Activated CD4-positive, alpha-beta memory T cell treated with anti-CD3 and anti-CD28 coated beads for 36 hours (primary cell): ENCODE measurements at regions of chr2 and their contacts with region 1.

Region 1: DNA sequence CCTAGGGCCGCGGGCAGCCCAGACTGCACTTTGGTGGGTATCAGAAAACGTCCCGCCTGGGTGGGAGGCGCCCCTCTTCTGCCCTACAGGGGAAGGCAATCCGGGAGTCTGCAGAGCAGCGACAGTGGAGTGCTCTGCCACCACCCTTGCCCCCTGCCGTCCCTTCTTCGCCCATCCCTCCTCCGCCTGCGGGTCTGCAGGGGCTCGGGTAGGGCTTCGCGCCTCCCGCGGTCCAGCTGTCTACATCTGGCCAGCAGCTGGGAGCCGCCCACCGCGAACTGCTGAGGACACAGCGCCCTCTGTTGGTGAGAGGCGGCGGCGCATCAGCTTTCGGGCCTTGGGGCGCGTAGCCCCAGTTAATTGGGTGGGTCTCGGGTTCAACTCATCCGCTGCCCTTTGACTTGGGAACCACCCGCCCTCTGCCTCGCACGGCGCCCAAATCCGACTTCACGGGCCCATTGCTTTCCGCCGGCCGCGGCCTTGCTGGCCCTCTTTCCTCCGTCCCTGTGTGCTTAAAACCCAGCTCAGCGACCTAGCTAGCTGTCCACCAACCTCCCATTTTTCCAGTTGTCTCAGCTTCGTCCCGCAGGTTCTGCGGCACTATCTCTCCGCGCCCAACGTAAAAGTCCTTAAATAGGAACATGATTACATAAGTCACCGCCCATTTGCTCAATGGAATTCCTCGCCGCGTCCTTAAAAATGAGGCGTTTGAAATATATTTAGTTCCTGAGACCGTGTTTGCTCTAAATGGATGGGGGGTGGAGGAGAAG is 17.6 kb downstream of the WNT10A start:
- DNase-seq: peak; percentile 88
- H3K4me3 Mint-ChIP-seq: peak overlapping the region; percentile 58
- H3K27ac Mint-ChIP-seq: peak overlapping the region; percentile 72
- H3K4me1 Mint-ChIP-seq: peaks cover 43% of the 10 kb centered on the region
- H3K27me3 Mint-ChIP-seq: peaks cover 16% of the 10 kb centered on the region

Region 2: DNA sequence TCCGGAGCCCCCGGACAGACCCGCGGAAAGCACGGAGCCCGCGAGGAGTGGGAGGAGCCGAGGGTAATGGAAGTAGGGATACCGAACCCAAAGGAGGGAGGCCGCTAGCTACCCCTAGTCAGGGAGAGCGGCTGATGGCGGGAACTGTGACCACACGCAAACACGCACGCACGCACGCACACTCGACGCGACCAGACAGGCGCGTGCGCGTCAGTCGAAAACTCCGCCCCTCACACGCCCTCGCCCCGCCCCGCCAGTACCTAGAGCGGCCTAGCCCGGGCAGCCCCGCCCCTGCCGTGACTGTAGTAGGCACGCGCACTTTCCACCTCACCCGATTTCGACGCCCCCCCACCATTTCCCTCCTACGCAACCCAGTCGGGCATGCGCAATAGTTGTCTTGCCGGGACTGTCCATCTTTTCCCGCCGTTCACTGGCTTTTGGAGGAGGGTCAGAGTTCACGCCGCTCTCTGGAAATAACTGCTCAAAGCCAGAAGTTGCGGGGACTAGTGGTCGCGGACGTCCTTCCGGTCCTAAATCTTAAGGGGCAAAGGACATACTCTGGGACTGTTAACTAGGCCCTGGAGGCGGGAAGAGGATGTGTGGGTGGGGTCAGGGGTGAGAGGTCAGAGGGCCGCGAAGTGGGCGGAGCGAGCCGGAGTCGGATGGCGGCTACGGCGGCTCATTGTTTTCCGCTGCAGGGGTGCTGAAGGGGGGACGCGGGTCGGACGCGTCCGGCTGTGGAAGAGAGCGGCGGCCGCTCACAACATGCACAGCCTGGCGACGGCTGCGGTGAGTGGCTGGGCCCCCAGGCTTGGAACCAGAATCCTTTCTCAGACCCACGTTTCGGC is 329.9 kb before region 1 on chr2 and contains the starts of genes CNOT9 and USP37:
- CTCF ChIA-PET with region 1: no interaction called
- POLR2A ChIA-PET with region 1: no interaction called
- intact Hi-C with region 1: loop called (anchors 2 kb)
- DNase-seq: peak; percentile 100
- H3K4me3 Mint-ChIP-seq: peak within 1 kb of the TSS; percentile 96
- H3K27ac Mint-ChIP-seq: peak within 1 kb of the TSS; percentile 100
- H3K4me1 Mint-ChIP-seq: peaks cover 54% of the 10 kb centered on the region
- H3K27me3 Mint-ChIP-seq: no peaks in the 10 kb centered on the region
- total RNA-seq, gene CNOT9: 84.7 to 87.3 TPM
- total RNA-seq, gene USP37: 27.2 to 28.7 TPM

Region 3: DNA sequence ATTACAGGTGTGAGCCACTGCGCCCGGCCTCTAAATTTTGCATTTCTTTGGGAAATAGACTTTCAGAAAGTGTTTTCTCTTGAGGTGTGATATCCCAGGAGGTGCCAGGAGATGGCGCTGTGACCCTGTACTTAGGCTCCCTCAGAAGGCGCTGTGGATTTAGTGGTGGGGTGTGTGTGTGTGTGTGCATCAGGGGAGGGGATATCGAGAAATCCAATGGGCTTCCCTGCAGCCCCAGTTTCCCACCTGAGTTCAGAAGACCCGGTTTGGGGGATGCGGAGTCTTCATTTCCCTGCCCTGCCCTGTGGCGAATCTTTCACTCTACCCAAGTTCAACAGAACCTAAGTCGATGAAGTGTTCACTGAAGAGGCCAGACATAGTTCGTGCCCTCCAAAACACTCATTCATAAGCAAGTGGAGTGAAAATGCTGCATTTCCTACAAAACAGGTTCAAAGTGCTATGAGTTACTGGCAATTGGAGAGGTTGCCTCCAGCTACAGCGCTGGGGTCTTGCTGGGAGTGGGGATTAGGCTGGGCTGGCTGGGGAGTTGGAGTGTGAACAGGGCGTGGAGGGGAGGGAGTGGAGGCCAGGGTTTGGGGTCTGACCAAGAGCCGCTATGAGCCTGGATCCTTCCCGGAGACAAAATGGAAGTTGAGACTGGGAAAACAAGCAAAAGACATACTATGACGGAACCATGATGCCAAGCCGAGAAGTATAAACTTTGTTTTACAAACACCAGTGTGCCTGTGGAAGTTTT is 45.2 kb before region 1 on chr2:
- CTCF ChIA-PET with region 1: interaction called, 107 read pairs
- POLR2A ChIA-PET with region 1: no interaction called
- intact Hi-C with region 1: loop called (anchors 1 kb)
- DNase-seq: peak; percentile 80
- H3K4me3 Mint-ChIP-seq: no peak overlapping the region
- H3K27ac Mint-ChIP-seq: no peak overlapping the region
- H3K4me1 Mint-ChIP-seq: no peaks in the 10 kb centered on the region
- H3K27me3 Mint-ChIP-seq: peaks cover 48% of the 10 kb centered on the region

Region 4: DNA sequence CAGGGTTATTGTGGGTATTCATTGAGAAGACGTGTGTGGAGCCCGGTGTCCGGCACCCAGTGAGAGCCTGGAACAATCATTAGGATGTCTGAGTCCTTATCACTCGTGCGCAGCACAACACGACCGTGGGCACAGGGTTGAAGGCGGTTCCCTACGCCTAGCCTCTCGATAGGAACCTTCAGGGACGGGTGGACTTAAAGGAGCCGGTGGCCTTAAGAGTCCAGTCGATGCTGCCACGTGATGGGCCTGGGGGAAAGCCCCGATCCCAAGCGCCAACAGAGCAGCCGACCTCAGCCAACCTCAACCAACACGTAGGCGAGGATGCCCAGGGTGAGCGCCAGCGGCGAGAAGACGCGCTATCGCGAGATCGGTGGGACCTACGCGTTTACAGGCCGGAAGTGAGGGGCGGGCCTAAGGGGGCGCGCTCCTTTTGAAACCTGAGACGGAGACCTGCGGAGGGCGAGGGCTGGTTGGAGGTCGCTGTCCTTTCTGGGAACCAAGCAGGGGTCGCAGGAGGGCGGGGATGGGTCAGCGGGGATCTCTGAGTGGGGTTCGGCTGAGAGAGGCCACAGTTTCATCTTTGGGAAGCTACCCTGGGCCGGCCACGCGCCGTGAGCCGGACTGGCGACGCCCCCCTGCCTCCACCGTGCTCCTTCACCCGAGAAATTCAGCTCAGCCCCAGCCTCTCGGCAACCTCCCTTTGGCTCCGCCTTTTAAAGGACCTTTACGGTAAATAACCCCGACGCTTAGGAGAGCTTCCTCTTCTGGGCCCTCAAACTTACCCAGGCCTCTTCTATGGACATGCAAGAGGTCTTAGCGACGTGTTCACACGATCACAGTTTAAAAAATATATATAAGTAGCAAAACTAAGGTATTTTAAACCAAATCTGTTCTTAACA is 10.7 kb after region 1 on chr2:
- CTCF ChIA-PET with region 1: interaction called, 75 read pairs
- POLR2A ChIA-PET with region 1: interaction called, 11 read pairs
- intact Hi-C with region 1: loop called (anchors 1 kb)
- DNase-seq: peak; percentile 96
- H3K4me3 Mint-ChIP-seq: peak overlapping the region; percentile 85
- H3K27ac Mint-ChIP-seq: peak overlapping the region; percentile 71
- H3K4me1 Mint-ChIP-seq: peaks cover 15% of the 10 kb centered on the region
- H3K27me3 Mint-ChIP-seq: peaks cover 6% of the 10 kb centered on the region

Region 5: DNA sequence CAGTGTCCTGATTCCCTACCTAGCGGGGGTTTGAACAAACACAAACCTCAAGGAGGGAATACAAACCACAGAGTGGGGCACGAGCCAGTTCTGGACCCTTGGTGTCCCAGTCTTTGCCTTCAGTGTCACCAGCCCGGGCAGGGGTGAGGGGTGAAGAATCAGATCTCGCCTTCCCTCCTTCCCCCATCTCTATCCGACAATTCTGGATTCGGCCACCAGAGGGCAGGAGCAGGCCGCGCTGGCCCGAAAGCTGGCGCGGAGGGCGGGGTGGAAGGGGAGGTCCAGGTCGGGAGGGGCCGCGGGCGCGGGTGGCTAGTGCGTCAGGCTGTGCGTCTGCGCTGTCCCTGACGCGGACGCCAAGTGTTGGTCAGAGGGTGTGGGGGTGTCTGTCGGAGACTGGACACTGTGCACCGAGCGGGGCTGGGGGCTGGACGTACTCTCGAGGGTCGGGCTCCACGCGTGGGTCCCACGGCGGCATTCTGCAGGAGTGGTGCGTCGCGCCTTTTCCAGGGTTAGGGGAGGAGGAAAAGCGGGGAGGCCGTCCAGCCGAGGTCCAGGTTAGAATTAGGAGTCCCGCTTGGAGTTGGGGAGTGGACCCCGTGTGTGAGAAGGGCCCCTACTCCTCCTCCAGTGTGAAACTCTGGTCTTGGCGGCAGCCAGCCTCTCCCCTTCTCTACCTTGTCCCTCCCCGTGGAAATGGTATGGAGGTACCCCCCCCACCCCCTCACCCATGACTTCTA is 97.8 kb after region 1 on chr2:
- CTCF ChIA-PET with region 1: interaction called, 16 read pairs
- POLR2A ChIA-PET with region 1: interaction called, 5 read pairs
- intact Hi-C with region 1: no loop called
- DNase-seq: peak; percentile 86
- H3K4me3 Mint-ChIP-seq: no peak overlapping the region
- H3K27ac Mint-ChIP-seq: no peak overlapping the region
- H3K4me1 Mint-ChIP-seq: peaks cover 2% of the 10 kb centered on the region
- H3K27me3 Mint-ChIP-seq: peaks cover 73% of the 10 kb centered on the region

Region 6: GRCh38 chr2:219331560-219332213 is 433.4 kb after region 1 on chr2:
- CTCF ChIA-PET with region 1: no interaction called
- POLR2A ChIA-PET with region 1: no interaction called
- intact Hi-C with region 1: no loop called
- DNase-seq: peak; percentile 28
- H3K4me3 Mint-ChIP-seq: no peak overlapping the region
- H3K27ac Mint-ChIP-seq: no peak overlapping the region
- H3K4me1 Mint-ChIP-seq: no peaks in the 10 kb centered on the region
- H3K27me3 Mint-ChIP-seq: peaks cover 46% of the 10 kb centered on the region